ENCODE measurements at regions of chr2 and their contacts with region 1.

Region 1: GRCh38 chr2:44361330-44362206 is at the starts of genes CAMKMT and PREPL:
- DNase-seq: peak; percentile 97
- H3K4me3 Mint-ChIP-seq: peak within 1 kb of the TSS; percentile 100
- H3K27ac Mint-ChIP-seq: peak within 1 kb of the TSS; percentile 99
- H3K4me1 Mint-ChIP-seq: peaks cover 36% of the 10 kb centered on the region
- H3K27me3 Mint-ChIP-seq: no peaks in the 10 kb centered on the region
- total RNA-seq, gene CAMKMT: 11.2 TPM in 2 replicates
- total RNA-seq, gene PREPL: 29.7 and 30.1 TPM in 2 replicates

Region 2: DNA sequence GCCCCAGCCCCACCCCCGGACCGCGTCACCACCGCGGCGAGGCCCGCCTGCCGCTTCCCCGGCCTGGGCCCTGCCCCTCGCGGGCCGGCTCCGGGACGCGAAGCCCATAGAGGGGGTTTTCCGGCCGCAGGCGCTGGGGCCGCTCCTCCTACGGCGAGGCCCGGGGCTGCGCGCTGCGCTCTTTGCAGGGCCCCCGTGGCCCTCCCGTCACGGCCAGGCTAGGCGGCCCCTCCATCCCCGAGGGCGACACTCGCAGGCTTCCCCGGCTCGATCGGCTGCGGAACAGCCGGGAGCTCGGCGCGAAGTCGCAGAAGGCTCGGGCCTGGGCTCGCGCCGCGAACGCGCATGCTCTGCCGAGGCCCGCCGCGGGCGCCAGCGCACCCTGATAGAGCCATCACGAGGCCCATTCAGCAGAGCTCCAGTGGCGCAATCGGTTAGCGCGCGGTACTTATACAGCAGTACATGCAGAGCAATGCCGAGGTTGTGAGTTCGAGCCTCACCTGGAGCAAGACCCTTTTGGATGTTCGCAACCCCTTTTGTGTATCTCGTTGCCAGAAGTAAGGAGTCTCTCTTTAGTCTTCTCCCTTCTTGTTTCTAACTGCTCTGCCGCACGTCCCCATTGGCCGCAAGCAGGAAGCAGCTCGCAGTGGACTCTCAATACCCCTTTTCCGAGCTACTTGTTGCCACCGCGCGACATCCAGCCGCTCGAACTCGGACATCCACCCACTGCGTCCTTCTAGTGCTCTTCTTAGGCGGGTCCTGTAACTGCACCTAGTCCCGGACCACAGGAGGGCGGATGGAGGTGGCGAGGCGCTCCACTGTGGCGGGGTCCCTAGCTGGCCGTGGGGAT is 1551.2 kb before region 1 on chr2:
- intact Hi-C with region 1: loop called (anchors 5 kb)
- DNase-seq: peak; percentile 94
- H3K4me3 Mint-ChIP-seq: peak overlapping the region; percentile 95
- H3K27ac Mint-ChIP-seq: peak overlapping the region; percentile 100
- H3K4me1 Mint-ChIP-seq: peaks cover 21% of the 10 kb centered on the region
- H3K27me3 Mint-ChIP-seq: no peaks in the 10 kb centered on the region

Region 3: DNA sequence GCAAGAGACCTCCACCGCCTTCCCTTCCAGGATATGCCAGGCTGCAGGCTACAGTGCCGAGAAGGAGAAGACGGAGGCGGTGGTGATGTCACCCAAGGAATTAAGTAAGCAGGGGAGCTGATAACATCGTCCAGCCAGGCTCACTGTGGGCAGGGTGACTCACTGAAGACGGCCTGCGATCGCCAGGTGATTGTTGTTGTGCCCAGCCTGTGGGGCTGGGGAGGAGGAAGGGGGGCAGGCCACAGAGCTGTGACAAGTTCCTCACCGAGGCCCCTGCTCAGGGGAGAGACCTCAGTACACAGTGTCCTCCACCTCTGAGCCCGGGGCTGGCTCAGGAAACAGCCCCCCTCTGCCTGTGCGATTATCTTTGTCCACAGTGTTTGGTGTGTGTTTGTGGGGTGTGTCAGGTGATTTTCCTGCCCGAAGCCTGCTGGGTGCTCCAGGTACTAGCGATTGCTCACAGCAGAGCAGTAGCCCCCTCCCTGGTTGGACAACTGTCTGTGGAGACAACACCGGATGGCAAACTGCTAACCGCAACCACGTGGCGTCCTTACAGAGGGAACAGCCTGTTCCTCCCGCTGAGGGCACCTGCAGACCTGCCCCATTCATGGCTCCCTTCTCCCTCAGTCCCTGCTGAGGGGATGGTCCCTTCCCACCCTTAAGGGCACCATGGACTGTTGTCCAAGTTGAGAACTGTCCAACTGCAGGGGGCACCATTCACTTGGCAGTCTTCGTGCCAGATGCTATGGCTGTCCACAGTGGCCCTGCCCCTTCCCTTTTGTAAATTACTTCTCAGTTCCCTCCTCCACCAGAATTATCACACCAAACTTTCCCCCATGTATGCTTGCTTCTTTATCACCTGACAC is 1230.3 kb before region 1 on chr2:
- intact Hi-C with region 1: no loop called
- DNase-seq: peak; percentile 79
- H3K4me3 Mint-ChIP-seq: peak overlapping the region; percentile 65
- H3K27ac Mint-ChIP-seq: peak overlapping the region; percentile 67
- H3K4me1 Mint-ChIP-seq: peaks cover 78% of the 10 kb centered on the region
- H3K27me3 Mint-ChIP-seq: no peaks in the 10 kb centered on the region

Region 4: GRCh38 chr2:43995733-43996533 is 365.6 kb before region 1 on chr2 and contains the start of gene LRPPRC:
- intact Hi-C with region 1: loop called (anchors 2 kb)
- DNase-seq: peak; percentile 87
- H3K4me3 Mint-ChIP-seq: peak within 1 kb of the TSS; percentile 93
- H3K27ac Mint-ChIP-seq: peak within 1 kb of the TSS; percentile 97
- H3K4me1 Mint-ChIP-seq: peaks cover 33% of the 10 kb centered on the region
- H3K27me3 Mint-ChIP-seq: peaks cover 2% of the 10 kb centered on the region
- total RNA-seq, gene LRPPRC: 156 and 161 TPM in 2 replicates

Region 5: GRCh38 chr2:44120428-44120827 is 241.1 kb before region 1 on chr2:
- intact Hi-C with region 1: loop called (anchors 1 kb)
- DNase-seq: peak; percentile 31
- H3K4me3 Mint-ChIP-seq: no peak overlapping the region
- H3K27ac Mint-ChIP-seq: peak overlapping the region; percentile 33
- H3K4me1 Mint-ChIP-seq: peaks cover 32% of the 10 kb centered on the region
- H3K27me3 Mint-ChIP-seq: no peaks in the 10 kb centered on the region

Region 6: GRCh38 chr2:44167940-44168680 is 193.5 kb before region 1 on chr2:
- intact Hi-C with region 1: loop called (anchors 1 kb)
- DNase-seq: peak; percentile 97
- H3K4me3 Mint-ChIP-seq: peak overlapping the region; percentile 94
- H3K27ac Mint-ChIP-seq: peak overlapping the region; percentile 99
- H3K4me1 Mint-ChIP-seq: peaks cover 29% of the 10 kb centered on the region
- H3K27me3 Mint-ChIP-seq: no peaks in the 10 kb centered on the region

Region 7: GRCh38 chr2:44433881-44434280 is 72.3 kb after region 1 on chr2:
- intact Hi-C with region 1: no loop called
- DNase-seq: no peak
- H3K4me3 Mint-ChIP-seq: no peak overlapping the region
- H3K27ac Mint-ChIP-seq: no peak overlapping the region
- H3K4me1 Mint-ChIP-seq: peaks cover 5% of the 10 kb centered on the region
- H3K27me3 Mint-ChIP-seq: no peaks in the 10 kb centered on the region

Region 8: GRCh38 chr2:44578421-44579135 is 217.0 kb after region 1 on chr2:
- intact Hi-C with region 1: loop called (anchors 10 kb)
- DNase-seq: no peak
- H3K4me3 Mint-ChIP-seq: peak overlapping the region; percentile 40
- H3K27ac Mint-ChIP-seq: peak overlapping the region; percentile 74
- H3K4me1 Mint-ChIP-seq: peaks cover 30% of the 10 kb centered on the region
- H3K27me3 Mint-ChIP-seq: no peaks in the 10 kb centered on the region